Psoas muscle (tissue), 8 donors: ENCODE measurements at regions of chr3 and their contacts with region 1.

Region 1: GRCh38 chr3:151468284-151468917 is 7.5 kb upstream of the IGSF10 start:
- DNase-seq: no peak
- ATAC-seq: peak in 3 of 4 donors; percentile 57 to 75 (median 73)
- H3K4me3 ChIP-seq: no peak overlapping the region
- H3K27ac ChIP-seq: no peak overlapping the region
- H3K4me1 ChIP-seq: no peaks in the 10 kb centered on the region
- H3K27me3 ChIP-seq: peaks cover 0 to 15% (median 0%) of the 10 kb centered on the region in 3 donors
- CTCF ChIP-seq: peak; percentile 79

Region 2: GRCh38 chr3:151434151-151434890 is 34.1 kb before region 1 on chr3:
- intact Hi-C with region 1: no loop called
- DNase-seq: no peak
- ATAC-seq: no peak
- H3K4me3 ChIP-seq: no peak overlapping the region
- H3K27ac ChIP-seq: no peak overlapping the region
- H3K4me1 ChIP-seq: no peaks in the 10 kb centered on the region
- H3K27me3 ChIP-seq: no peaks in the 10 kb centered on the region
- CTCF ChIP-seq: no peak

Region 3: DNA sequence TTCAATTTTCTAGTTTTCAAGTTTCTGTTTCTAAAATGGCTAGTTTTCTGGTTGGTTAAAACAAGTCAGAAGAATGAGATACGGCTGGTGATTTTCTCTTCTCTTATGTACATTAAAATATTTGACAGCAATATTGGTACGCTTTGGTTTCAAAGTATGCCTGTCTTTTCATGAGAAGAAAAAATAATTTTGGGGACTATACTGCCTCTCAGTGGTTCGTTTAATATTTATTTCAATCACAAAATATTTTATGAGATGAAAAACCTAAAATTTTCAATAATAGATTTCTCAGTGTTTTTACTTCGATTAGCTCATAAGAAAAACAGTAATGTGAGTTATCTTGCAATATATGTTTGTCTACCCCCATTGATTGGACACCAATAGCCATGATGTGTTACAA is 192.5 kb after region 1 on chr3:
- intact Hi-C with region 1: loop called (anchors 2 to 10 kb)
- DNase-seq: no peak
- ATAC-seq: no peak
- H3K4me3 ChIP-seq: no peak overlapping the region
- H3K27ac ChIP-seq: no peak overlapping the region
- H3K4me1 ChIP-seq: no peaks in the 10 kb centered on the region
- H3K27me3 ChIP-seq: no peaks in the 10 kb centered on the region
- CTCF ChIP-seq: peak; percentile 41

Region 4: DNA sequence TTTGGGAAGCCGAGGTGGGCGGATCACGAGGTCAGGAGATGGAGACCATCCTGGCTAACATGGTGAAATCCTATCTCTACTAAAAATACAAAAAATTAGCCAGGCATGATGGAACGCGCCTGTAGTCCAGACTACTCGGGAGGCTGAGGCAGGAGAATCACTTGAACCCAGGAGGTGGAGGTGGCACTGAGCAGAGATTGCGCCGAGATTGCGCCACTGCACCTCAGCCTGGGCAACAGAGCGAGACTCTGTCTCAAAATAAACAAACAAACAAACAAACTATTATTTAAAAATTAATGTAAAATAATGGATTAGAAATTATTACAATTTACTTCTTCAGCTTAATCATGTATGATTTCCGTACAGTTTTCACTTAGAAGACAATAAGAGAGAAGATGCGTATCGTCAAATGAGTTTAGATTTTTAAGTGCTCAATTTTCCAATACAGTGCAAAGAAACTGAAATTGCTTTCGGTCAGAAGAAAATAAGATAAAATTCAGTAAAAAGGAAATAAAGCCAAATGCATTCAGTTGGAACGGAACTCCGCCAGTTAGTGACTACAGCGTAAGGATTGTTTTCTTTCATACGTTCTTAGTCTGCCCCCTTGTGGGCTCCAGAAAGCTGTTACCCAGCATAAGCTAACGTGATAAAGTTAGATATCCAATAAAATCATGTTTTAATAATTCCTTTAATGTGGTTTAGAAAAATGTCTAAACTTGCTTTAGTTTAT is 370.3 kb after region 1 on chr3:
- intact Hi-C with region 1: loop called in 1 of 2 experiments (anchors 10 kb)
- DNase-seq: no peak
- ATAC-seq: peak in 3 of 4 donors; percentile 47 to 87 (median 72)
- H3K4me3 ChIP-seq: peak overlapping the region; percentile 26
- H3K27ac ChIP-seq: no peak overlapping the region
- H3K4me1 ChIP-seq: peaks cover 11% of the 10 kb centered on the region
- H3K27me3 ChIP-seq: no peaks in the 10 kb centered on the region
- CTCF ChIP-seq: peak; percentile 84